ENCODE measurements at regions of chr15 and their contacts with region 1.

Region 1: GRCh38 chr15:99733268-99734039 is at the start of gene LYSMD4:
- DNase-seq: peak; percentile 85 to 97
- H3K4me3 ChIP-seq: peak within 1 kb of the TSS; percentile 70 to 88 (median 75)
- H3K27ac ChIP-seq: peak within 1 kb of the TSS; percentile 83
- H3K4me1 ChIP-seq: peaks cover 2 to 23% (median 6%) of the 10 kb centered on the region in 4 experiments; a peak in 5 of 7 replicates
- H3K27me3 ChIP-seq: peaks cover 0 to 10% (median 3%) of the 10 kb centered on the region in 4 experiments; a peak in 4 of 7 replicates
- CTCF ChIP-seq: no peak
- EP300 ChIP-seq: no peak
- POLR2A ChIP-seq: peak in 1 of 2 experiments; percentile 81; a peak in 2 of 3 replicates
- RAD21 ChIP-seq: no peak
- total RNA-seq, gene LYSMD4: 16.0 and 17.5 TPM in 2 replicates

Region 2: GRCh38 chr15:99719096-99719541 is 14.3 kb before region 1 on chr15:
- CTCF ChIA-PET with region 1: interaction called, 18 read pairs
- POLR2A ChIA-PET with region 1: interaction called, 11 read pairs
- DNase-seq: no peak
- H3K4me3 ChIP-seq: no peak overlapping the region
- H3K27ac ChIP-seq: no peak overlapping the region
- H3K4me1 ChIP-seq: peaks cover 0 to 2% (median 0%) of the 10 kb centered on the region in 4 experiments; a peak in 1 of 7 replicates
- H3K27me3 ChIP-seq: no peaks in the 10 kb centered on the region
- CTCF ChIP-seq: no peak
- EP300 ChIP-seq: no peak
- POLR2A ChIP-seq: no peak
- RAD21 ChIP-seq: no peak

Region 3: DNA sequence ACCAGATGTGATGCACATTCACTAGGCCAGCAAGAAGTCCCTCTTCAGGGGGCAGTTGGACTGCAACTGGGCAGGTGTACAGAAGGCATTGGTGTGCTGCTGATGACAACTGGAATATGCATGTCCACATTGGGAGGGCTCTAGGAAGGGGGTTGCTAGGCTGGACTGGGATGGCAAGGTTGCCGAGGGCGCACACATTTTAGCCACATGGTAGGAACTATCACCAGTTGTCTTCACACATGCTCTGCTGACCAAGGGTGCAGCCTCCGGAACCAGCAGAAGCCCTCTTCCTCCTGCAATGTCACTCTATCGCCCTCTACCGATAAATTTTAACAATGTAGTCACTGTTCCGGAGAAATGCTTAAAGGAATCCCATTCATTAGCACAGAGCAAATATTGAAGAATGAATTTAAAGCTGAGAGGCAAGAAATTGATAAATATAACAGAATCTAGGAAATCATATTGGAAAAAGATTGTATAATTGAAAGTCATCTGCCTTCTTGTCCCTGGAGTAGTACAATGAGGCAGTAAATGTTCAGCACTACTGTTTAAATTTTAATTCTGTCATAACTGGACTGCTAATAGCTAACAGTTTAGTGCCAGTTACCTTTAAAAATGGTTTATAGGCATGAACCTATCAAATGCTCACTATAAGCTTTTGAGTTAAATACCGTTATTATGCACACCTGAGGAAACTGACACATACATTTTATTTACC is 22.4 kb after region 1 on chr15:
- CTCF ChIA-PET with region 1: interaction called, 92 read pairs
- POLR2A ChIA-PET with region 1: interaction called, 5 read pairs
- DNase-seq: peak in 1 of 2 experiments; percentile 49
- H3K4me3 ChIP-seq: no peak overlapping the region
- H3K27ac ChIP-seq: no peak overlapping the region
- H3K4me1 ChIP-seq: no peaks in the 10 kb centered on the region
- H3K27me3 ChIP-seq: peaks cover 0 to 10% (median 0%) of the 10 kb centered on the region in 4 experiments; a peak in 2 of 7 replicates
- CTCF ChIP-seq: peak; percentile 30 to 74 (median 71)
- EP300 ChIP-seq: no peak
- POLR2A ChIP-seq: no peak
- RAD21 ChIP-seq: peak; percentile 85 to 87

Region 4: GRCh38 chr15:99857836-99858235 is 124.4 kb after region 1 on chr15:
- CTCF ChIA-PET with region 1: no interaction called
- POLR2A ChIA-PET with region 1: no interaction called
- DNase-seq: no peak
- H3K4me3 ChIP-seq: no peak overlapping the region
- H3K27ac ChIP-seq: no peak overlapping the region
- H3K4me1 ChIP-seq: no peaks in the 10 kb centered on the region
- H3K27me3 ChIP-seq: no peaks in the 10 kb centered on the region
- CTCF ChIP-seq: no peak
- EP300 ChIP-seq: no peak
- POLR2A ChIP-seq: no peak
- RAD21 ChIP-seq: no peak

Region 5: DNA sequence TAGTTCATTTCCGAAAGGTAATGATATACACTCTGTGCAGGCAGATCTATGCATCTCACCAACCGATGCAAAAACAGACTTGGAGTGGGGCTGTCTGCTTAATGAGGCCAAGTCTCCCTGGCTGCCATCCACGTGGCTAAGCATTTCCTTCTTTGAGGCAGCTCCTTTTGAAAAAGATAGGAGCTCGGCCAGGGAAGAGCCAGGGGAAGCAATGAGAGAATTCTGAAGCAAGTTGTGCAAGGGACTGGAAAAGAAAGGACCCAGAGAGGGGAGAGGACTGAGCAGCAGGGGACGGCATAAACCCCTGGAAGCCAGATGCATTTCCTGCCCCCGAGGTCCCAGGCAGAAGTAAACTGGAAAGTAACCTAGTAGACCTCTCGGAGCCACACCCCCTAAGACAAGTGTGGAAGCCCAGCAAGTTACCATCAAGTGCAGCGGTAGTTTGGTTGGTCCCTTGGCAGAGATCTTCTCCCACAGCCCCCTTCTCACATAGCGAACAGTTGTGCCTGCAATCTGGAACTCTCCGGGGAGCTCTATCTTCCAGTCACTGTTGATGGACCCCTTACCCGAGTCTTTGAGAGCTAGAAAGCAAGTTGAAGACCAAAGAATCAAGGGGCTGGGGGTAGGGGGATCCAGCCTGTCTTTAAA is 320.1 kb after region 1 on chr15:
- CTCF ChIA-PET with region 1: no interaction called
- POLR2A ChIA-PET with region 1: no interaction called
- DNase-seq: no peak
- H3K4me3 ChIP-seq: no peak overlapping the region
- H3K27ac ChIP-seq: no peak overlapping the region
- H3K4me1 ChIP-seq: no peaks in the 10 kb centered on the region
- H3K27me3 ChIP-seq: peaks cover 0 to 2% (median 0%) of the 10 kb centered on the region in 4 experiments; a peak in 2 of 7 replicates
- CTCF ChIP-seq: no peak
- EP300 ChIP-seq: no peak
- POLR2A ChIP-seq: no peak
- RAD21 ChIP-seq: no peak